Breast epithelium (tissue), 4 donors: ENCODE measurements at regions of chr14 and their contacts with region 1.

Region 1: GRCh38 chr14:74913986-74914573 is 9.0 kb downstream of the RPS6KL1 start:
- DNase-seq: peak; percentile 64 to 67
- H3K4me3 ChIP-seq: no peak overlapping the region
- H3K27ac ChIP-seq: peak overlapping the region; percentile 11 to 76
- H3K4me1 ChIP-seq: peaks cover 6 to 19% of the 10 kb centered on the region in 2 donors
- H3K27me3 ChIP-seq: no peaks in the 10 kb centered on the region
- CTCF ChIP-seq: peak; percentile 34 to 76 (median 68)
- POLR2A ChIP-seq: no peak

Region 2: GRCh38 chr14:73069585-73069984 is 1844.5 kb before region 1 on chr14:
- intact Hi-C with region 1: no loop called
- DNase-seq: no peak
- H3K4me3 ChIP-seq: no peak overlapping the region
- H3K27ac ChIP-seq: no peak overlapping the region
- H3K4me1 ChIP-seq: no peaks in the 10 kb centered on the region
- H3K27me3 ChIP-seq: no peaks in the 10 kb centered on the region
- CTCF ChIP-seq: no peak
- POLR2A ChIP-seq: no peak

Region 3: GRCh38 chr14:74671789-74672188 is 242.3 kb before region 1 on chr14:
- intact Hi-C with region 1: no loop called
- DNase-seq: peak in 1 of 2 donors; percentile 55
- H3K4me3 ChIP-seq: no peak overlapping the region
- H3K27ac ChIP-seq: peak overlapping the region in 1 of 2 donors; percentile 55
- H3K4me1 ChIP-seq: no peaks in the 10 kb centered on the region
- H3K27me3 ChIP-seq: no peaks in the 10 kb centered on the region
- CTCF ChIP-seq: no peak
- POLR2A ChIP-seq: no peak

Region 4: DNA sequence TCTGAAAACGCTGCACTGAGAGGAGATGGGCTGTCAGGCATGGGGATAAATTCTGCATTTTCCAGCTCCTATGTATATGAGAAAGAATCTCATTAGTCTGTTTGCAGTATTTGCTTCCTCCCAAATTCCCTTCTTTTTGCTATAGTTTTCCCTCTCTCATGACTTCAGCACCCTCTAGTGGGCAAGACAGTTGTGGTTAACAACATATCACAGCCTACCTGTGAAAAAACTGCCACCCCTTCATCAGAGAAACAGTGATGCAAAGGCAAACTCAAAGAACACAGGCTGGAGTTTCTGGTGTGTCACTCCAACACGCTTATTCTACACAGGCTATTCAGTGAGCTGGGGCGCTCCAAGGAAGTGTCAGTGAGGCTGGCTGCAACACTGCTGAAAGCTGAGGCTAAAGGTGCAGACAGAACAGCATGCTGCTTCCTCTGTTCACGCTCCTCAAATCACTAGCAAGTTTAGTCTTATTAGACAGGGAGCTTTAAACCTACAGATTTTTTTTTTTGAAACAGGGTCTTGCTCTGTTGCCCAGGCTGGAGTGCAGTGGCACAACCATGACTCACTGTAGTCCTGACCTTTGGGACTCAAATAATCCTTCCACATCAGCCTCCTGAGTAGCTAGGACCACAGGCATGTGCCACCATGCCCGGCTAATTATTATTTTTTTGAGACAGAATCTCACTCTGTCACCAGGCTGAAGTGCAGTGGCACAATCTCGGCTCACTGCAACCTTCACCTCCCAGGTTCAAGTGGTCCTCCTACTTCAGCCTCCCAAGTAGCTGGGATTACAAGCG is 174.7 kb after region 1 on chr14:
- intact Hi-C with region 1: loop called (anchors 10 kb)
- DNase-seq: no peak
- H3K4me3 ChIP-seq: no peak overlapping the region
- H3K27ac ChIP-seq: no peak overlapping the region
- H3K4me1 ChIP-seq: no peaks in the 10 kb centered on the region
- H3K27me3 ChIP-seq: no peaks in the 10 kb centered on the region
- CTCF ChIP-seq: peak; percentile 55 to 81 (median 79)
- POLR2A ChIP-seq: no peak